Heart right ventricle (tissue), 16 donors: ENCODE measurements at regions of chr13 and their contacts with region 1.

Region 1: GRCh38 chr13:43339805-43340550 is 316.6 kb downstream of the DNAJC15 start:
- DNase-seq: no peak
- ATAC-seq: no peak
- H3K4me3 ChIP-seq: no peak overlapping the region
- H3K27ac ChIP-seq: no peak overlapping the region
- H3K4me1 ChIP-seq: peaks cover 0 to 13% (median 6%) of the 10 kb centered on the region in 9 donors
- H3K27me3 ChIP-seq: no peaks in the 10 kb centered on the region
- CTCF ChIP-seq: no peak

Region 2: DNA sequence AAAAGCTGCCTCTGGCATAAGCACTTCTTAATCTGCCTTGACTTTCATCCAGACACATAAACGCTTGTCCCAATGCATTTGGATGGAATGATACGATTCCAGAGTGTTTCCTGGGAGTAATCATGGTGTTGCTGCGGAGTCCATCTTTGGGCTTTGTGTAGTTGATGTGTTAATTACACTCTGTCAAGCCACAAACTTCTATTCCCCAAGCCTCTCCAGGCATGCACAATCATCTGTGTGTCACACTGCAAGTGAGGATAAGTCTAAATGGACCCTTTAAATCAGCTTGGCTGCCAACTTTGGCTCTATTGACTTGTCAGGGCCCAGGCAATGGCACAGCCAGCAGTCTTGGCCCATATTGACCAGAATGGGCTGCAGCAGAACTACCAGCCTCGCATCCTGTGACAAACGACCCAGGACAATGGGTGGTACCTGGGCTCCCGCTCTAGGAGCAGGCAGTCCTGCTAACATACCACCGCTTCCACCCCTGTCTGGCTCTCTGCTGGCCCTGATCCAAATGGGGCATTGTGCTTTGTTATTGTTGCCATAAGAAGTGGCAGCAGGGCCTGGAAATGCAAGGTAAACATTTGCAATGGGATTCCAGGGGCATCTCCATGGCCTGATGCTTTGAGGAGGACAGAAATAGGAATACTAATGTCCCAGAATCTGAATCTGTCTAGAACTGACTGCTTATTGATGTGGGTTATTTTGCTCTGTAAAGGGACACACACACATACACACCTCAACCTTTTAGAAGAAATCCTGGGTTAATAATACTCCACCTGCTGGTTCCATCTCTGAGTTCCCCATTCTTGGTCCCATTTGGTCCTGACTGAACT is 189.4 kb before region 1 on chr13:
- intact Hi-C with region 1: no loop called
- DNase-seq: no peak
- ATAC-seq: no peak
- H3K4me3 ChIP-seq: no peak overlapping the region
- H3K27ac ChIP-seq: no peak overlapping the region
- H3K4me1 ChIP-seq: peaks cover 0 to 4% (median 0%) of the 10 kb centered on the region in 9 donors
- H3K27me3 ChIP-seq: peaks cover 0 to 18% (median 0%) of the 10 kb centered on the region in 7 donors
- CTCF ChIP-seq: no peak

Region 3: DNA sequence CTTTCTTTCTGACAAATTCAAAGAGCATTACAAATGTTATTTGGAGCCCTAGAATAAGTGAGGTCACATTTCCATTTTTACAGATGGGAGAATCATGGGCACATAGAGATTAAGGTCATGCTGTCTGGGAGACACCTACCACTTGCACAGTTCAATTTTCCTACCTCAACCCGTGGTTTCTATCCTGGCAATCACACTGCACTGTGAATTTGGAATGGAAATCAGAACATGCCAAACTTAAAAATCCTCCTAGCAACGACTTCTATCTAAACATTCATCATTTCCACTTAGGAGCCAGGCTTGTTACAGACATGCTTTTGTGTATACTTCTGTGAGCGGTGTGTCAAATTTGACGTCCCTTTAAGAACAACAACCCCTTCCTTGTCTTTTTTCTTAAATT is 65.1 kb before region 1 on chr13:
- intact Hi-C with region 1: loop called in 1 of 10 experiments (anchors 5 kb)
- DNase-seq: no peak
- ATAC-seq: peak in 2 of 8 donors; percentile 47 to 56
- H3K4me3 ChIP-seq: no peak overlapping the region
- H3K27ac ChIP-seq: no peak overlapping the region
- H3K4me1 ChIP-seq: peaks cover 0 to 27% (median 8%) of the 10 kb centered on the region in 9 donors
- H3K27me3 ChIP-seq: no peaks in the 10 kb centered on the region
- CTCF ChIP-seq: no peak